Natural killer cell (primary cell): ENCODE measurements at regions of chr6 and their contacts with region 1.

Region 1: GRCh38 chr6:109382576-109383437 is 540 bp upstream of the CD164 start:
- DNase-seq: peak; percentile 93 to 97
- ATAC-seq: peak; percentile 65 to 82 (median 72)
- H3K4me3 ChIP-seq: peak overlapping the region; percentile 95
- H3K4me3 Mint-ChIP-seq: peak overlapping the region; percentile 96
- H3K27ac ChIP-seq: peak overlapping the region; percentile 93
- H3K27ac Mint-ChIP-seq: peak overlapping the region; percentile 88 to 98
- H3K4me1 ChIP-seq: peaks cover 15% of the 10 kb centered on the region
- H3K4me1 Mint-ChIP-seq: peaks cover 55 to 64% of the 10 kb centered on the region in 2 donors
- H3K27me3 ChIP-seq: no peaks in the 10 kb centered on the region
- H3K27me3 Mint-ChIP-seq: no peaks in the 10 kb centered on the region
- CTCF ChIP-seq: peak; percentile 79

Region 2: GRCh38 chr6:108558372-108559096 is 824.3 kb before region 1 on chr6:
- intact Hi-C with region 1: loop called (anchors 2 kb)
- DNase-seq: peak; percentile 97 to 99
- ATAC-seq: peak; percentile 59 to 80 (median 66)
- H3K4me3 ChIP-seq: peak overlapping the region; percentile 96
- H3K4me3 Mint-ChIP-seq: peak overlapping the region; percentile 96
- H3K27ac ChIP-seq: peak overlapping the region; percentile 100
- H3K27ac Mint-ChIP-seq: peak overlapping the region; percentile 97 to 98
- H3K4me1 ChIP-seq: peaks cover 21% of the 10 kb centered on the region
- H3K4me1 Mint-ChIP-seq: peaks cover 20 to 27% of the 10 kb centered on the region in 2 donors
- H3K27me3 ChIP-seq: no peaks in the 10 kb centered on the region
- H3K27me3 Mint-ChIP-seq: no peaks in the 10 kb centered on the region
- CTCF ChIP-seq: no peak

Region 3: DNA sequence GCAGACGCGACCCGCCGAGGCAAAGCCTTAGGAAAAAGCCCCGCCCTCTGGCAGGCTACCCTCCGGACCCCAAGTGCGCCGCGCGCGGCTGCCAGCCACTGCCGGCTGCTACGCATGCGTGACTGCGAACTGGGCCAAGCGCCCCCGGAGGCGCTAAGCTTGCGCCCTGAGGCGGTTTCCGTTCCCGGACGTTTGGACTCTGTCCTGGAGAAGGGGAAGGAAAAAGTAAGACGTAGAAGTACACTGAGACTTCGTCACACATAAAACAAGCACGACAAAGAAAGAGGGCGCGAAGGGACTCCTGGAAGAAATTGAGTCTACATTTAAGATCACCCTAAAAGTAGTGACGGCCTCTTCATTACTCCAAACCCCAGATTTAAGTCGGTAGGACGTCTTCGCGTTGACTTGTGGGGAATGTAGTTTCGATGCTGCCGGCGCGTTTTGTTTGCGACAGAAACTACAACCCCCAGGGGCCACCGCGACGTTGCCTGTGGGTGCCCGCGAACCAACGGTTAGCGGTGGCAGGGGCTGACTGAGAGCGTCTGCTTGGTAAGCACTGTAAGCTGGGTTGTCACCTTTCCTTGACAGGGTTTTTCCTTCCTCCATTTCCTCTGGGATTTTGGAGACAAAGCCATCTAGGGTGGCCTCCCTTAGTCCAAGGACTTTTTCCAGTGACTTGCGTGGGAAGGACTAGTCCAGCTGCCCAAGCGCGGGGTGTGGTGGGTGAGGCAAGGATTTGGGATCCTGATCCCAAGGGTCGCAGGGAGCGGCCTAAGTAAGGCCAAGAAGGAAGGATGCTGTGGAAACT is 287.6 kb before region 1 on chr6 and contains the start of gene CEP57L1:
- intact Hi-C with region 1: loop called (anchors 1 kb)
- DNase-seq: peak; percentile 94 to 97
- ATAC-seq: peak; percentile 71 to 87 (median 74)
- H3K4me3 ChIP-seq: peak within 1 kb of the TSS; percentile 64
- H3K4me3 Mint-ChIP-seq: peak within 1 kb of the TSS; percentile 94
- H3K27ac ChIP-seq: peak within 1 kb of the TSS; percentile 98
- H3K27ac Mint-ChIP-seq: peak within 1 kb of the TSS; percentile 98 to 99
- H3K4me1 ChIP-seq: peaks cover 8% of the 10 kb centered on the region
- H3K4me1 Mint-ChIP-seq: peaks cover 42 to 52% of the 10 kb centered on the region in 2 donors
- H3K27me3 ChIP-seq: no peaks in the 10 kb centered on the region
- H3K27me3 Mint-ChIP-seq: no peaks in the 10 kb centered on the region
- CTCF ChIP-seq: no peak
- total RNA-seq, gene CEP57L1: 8.9 to 12.5 (median 9.2) TPM

Region 4: DNA sequence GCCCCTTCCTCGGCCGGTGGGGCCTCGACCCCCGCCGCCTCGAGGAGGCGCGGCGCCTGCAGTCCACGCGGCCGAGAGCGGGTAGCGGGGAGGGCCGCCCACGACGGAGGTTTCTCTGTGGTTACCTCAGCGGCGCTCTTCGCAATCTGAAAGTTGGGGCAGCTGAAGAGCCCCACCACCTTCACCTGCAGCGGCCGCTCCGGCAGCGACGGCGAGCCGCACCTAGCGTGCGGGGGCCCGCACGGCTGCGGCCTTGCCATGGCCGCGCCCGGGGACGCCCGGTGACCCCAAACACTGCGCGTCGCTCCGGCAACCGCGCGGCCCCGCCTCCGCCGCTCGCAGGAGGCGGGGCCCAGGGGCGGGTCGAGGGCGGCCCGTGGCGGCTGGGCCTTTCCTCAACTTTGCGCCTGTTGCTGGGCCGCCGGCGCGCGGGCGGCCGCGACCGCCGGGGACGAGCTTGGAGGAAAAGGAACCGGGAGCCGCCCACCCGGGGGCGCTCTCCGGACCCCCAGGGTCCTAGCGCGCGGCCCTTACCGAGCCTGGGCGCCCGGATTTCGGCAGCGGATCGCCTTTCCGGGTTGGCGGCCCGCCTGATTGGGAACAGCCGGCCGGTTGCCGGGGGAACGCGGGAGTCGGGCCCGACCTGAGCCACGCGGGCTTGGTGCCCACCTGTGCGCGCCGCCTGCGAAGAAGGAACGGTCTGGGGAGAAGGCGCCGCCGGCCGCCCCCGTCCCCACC is 57.7 kb after region 1 on chr6 and contains the starts of genes PPIL6 and SMPD2:
- intact Hi-C with region 1: loop called (anchors 1 kb)
- DNase-seq: peak; percentile 81 to 90
- ATAC-seq: peak; percentile 87 to 94 (median 89)
- H3K4me3 ChIP-seq: peak within 1 kb of the TSS; percentile 64
- H3K4me3 Mint-ChIP-seq: peak within 1 kb of the TSS; percentile 89
- H3K27ac ChIP-seq: peak within 1 kb of the TSS; percentile 74
- H3K27ac Mint-ChIP-seq: peak within 1 kb of the TSS; percentile 81 to 92
- H3K4me1 ChIP-seq: peaks cover 23% of the 10 kb centered on the region
- H3K4me1 Mint-ChIP-seq: peaks cover 17 to 32% of the 10 kb centered on the region in 2 donors
- H3K27me3 ChIP-seq: no peaks in the 10 kb centered on the region
- H3K27me3 Mint-ChIP-seq: no peaks in the 10 kb centered on the region
- CTCF ChIP-seq: no peak
- total RNA-seq, gene PPIL6: 0.28 to 0.70 (median 0.40) TPM
- total RNA-seq, gene SMPD2: 25.0 to 37.3 (median 29.3) TPM

Region 5: DNA sequence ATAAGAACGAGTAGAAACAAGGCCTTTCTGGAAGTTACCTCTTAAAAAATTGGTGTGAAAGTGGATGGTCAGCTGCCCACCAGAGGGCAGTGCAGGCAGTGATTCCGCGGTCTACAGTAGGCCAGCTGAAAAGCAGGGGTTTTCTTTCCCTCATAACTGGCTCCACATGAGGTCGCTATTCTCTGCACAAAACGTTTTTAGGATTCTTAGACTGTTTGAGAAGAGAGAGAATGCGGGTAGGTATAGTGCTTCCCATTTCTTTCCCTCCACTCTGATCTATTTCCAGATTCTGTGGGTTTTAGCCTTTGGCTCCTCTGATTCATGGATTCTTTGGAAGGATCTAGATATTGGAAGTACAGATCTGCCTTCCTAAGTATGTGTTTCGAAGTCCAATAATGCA is 322.5 kb after region 1 on chr6:
- intact Hi-C with region 1: loop called (anchors 10 kb)
- DNase-seq: peak; percentile 74 to 89
- ATAC-seq: peak; percentile 77 to 94 (median 79)
- H3K4me3 ChIP-seq: no peak overlapping the region
- H3K4me3 Mint-ChIP-seq: peak overlapping the region; percentile 58
- H3K27ac ChIP-seq: no peak overlapping the region
- H3K27ac Mint-ChIP-seq: peak overlapping the region; percentile 88 to 93
- H3K4me1 ChIP-seq: peaks cover 9% of the 10 kb centered on the region
- H3K4me1 Mint-ChIP-seq: peaks cover 89% of the 10 kb centered on the region in 2 donors
- H3K27me3 ChIP-seq: no peaks in the 10 kb centered on the region
- H3K27me3 Mint-ChIP-seq: no peaks in the 10 kb centered on the region
- CTCF ChIP-seq: peak; percentile 97